ENCODE measurements at regions of chr9 and their contacts with region 1.

Region 1: DNA sequence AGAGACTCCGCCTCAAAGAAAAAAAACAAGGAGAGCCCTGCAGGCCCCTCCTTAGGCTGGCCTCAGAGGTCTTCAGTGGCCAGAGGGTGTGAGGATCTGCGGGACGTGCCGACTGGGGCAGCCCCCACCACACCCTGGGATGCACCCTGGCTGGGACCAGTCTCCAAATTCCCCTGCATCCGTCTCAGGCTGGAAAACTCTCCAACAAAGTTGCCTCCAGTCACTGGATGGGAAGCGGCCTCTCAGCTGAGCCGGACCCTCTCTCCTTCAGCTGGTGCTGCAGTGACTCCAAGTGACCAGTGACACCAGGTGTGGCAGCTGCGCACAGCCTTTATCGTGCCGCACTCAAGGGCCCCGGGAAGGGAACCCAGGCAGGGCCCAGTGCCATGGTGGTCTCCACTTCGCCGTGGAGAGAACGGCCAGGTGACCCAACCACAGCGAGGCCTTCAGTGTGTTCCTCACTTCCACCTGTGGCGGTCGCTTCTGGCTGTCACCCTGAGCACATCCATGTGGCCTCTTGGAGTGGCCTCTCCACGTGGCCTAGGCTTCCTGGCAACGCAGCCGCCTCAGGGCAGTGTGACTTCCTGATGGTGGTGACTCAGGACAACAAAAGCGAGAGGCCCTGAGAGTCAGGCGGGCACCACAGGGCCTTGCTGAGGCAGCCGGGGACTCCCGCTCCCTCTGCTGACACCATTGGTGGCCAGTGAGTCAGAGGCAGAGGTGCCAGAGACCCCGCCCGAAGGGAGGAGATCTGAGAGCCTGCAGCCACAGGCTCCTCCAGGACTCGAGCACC is 19.3 kb upstream of the CAMSAP1 start:
- DNase-seq: peak; percentile 95
- ATAC-seq: peak; percentile 91
- H3K4me3 Mint-ChIP-seq: peak overlapping the region; percentile 19
- H3K27ac Mint-ChIP-seq: peak overlapping the region; percentile 94
- H3K4me1 Mint-ChIP-seq: peaks cover 39% of the 10 kb centered on the region
- H3K27me3 Mint-ChIP-seq: no peaks in the 10 kb centered on the region

Region 2: GRCh38 chr9:135864447-135865049 is 62.0 kb before region 1 on chr9:
- CTCF ChIA-PET with region 1: interaction called, 4 read pairs
- POLR2A ChIA-PET with region 1: no interaction called
- intact Hi-C with region 1: loop called in 1 of 2 experiments (anchors 1 kb)
- DNase-seq: peak; percentile 84
- ATAC-seq: peak; percentile 58
- H3K4me3 Mint-ChIP-seq: no peak overlapping the region
- H3K27ac Mint-ChIP-seq: no peak overlapping the region
- H3K4me1 Mint-ChIP-seq: peaks cover 31% of the 10 kb centered on the region
- H3K27me3 Mint-ChIP-seq: no peaks in the 10 kb centered on the region

Region 3: GRCh38 chr9:135887585-135888050 is 39.0 kb before region 1 on chr9:
- CTCF ChIA-PET with region 1: interaction called, 3 read pairs
- POLR2A ChIA-PET with region 1: no interaction called
- intact Hi-C with region 1: loop called in 1 of 2 experiments (anchors 1 kb)
- DNase-seq: peak; percentile 83
- ATAC-seq: peak; percentile 90
- H3K4me3 Mint-ChIP-seq: peak overlapping the region; percentile 56
- H3K27ac Mint-ChIP-seq: peak overlapping the region; percentile 90
- H3K4me1 Mint-ChIP-seq: peaks cover 69% of the 10 kb centered on the region
- H3K27me3 Mint-ChIP-seq: no peaks in the 10 kb centered on the region

Region 4: GRCh38 chr9:135939351-135940265 is 13.0 kb after region 1 on chr9:
- CTCF ChIA-PET with region 1: no interaction called
- POLR2A ChIA-PET with region 1: interaction called, 5 read pairs
- intact Hi-C with region 1: loop called in 1 of 2 experiments (anchors 1 kb)
- DNase-seq: peak; percentile 71
- ATAC-seq: peak; percentile 69
- H3K4me3 Mint-ChIP-seq: peak overlapping the region; percentile 71
- H3K27ac Mint-ChIP-seq: peak overlapping the region; percentile 84
- H3K4me1 Mint-ChIP-seq: peaks cover 8% of the 10 kb centered on the region
- H3K27me3 Mint-ChIP-seq: no peaks in the 10 kb centered on the region

Region 5: GRCh38 chr9:136045971-136046920 is 119.6 kb after region 1 on chr9:
- CTCF ChIA-PET with region 1: no interaction called
- POLR2A ChIA-PET with region 1: no interaction called
- intact Hi-C with region 1: no loop called
- DNase-seq: no peak
- ATAC-seq: no peak
- H3K4me3 Mint-ChIP-seq: no peak overlapping the region
- H3K27ac Mint-ChIP-seq: no peak overlapping the region
- H3K4me1 Mint-ChIP-seq: no peaks in the 10 kb centered on the region
- H3K27me3 Mint-ChIP-seq: no peaks in the 10 kb centered on the region

Measured in activated CD4-positive, alpha-beta T cell treated with anti-CD3 and anti-CD28 coated beads for 36 hours (primary cell).